ENCODE measurements at regions of chr5 and their contacts with region 1.

Region 1: DNA sequence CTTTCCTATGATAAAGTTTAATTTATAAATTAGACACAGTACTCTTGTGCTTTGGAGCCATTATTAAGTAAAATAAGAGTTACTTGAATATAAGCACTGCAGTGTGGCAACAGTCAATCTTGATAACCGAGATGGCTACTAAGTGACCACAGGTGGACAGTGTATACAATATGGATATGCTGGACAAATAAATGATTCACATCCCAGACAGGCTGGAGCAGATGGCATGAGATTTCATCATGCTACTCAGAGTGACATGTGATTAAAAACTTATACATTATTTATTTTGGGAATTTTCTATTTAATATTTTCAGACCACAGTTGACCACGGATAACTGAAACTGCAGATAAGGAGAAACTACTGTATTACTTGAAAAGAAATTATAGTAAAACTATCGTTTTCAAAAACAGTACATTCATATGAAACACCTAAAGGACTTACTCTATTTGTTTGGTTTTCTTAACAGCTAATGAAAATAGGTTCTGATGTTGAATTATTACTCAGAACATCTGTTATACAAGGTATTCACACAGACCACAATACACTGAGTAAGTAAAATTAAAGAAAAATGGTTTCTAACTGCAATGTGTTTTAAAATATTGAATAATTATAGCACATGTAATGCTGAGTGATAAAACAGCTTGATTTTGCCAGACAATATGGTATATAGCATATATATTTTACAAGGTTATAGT is 16.0 kb downstream of the LYRM7 start:
- DNase-seq: no peak
- ATAC-seq: no peak
- H3K4me3 Mint-ChIP-seq: no peak overlapping the region
- H3K27ac Mint-ChIP-seq: no peak overlapping the region
- H3K4me1 Mint-ChIP-seq: no peaks in the 10 kb centered on the region
- H3K27me3 Mint-ChIP-seq: no peaks in the 10 kb centered on the region
- CTCF ChIP-seq: no peak

Region 2: DNA sequence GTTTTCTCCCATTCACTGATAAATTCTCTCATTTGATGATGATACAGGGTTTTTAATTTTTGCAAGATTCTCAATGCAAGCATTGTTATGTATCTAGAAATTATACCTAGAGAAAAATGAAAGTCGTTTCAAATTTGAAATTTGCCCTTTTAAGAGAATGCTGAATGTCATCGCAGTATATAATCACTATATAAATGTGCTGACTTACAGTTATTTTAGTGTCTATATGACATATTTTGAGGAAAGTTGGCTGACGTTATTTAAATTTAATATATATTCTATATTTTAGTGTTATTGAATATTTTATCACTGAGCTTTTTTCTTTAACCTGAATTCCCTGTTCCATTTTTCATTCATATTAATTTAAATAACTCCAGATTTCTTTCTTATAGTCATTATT is 13.9 kb after region 1 on chr5:
- CTCF ChIA-PET with region 1: no interaction called
- POLR2A ChIA-PET with region 1: interaction called, 3 read pairs
- intact Hi-C with region 1: loop called (anchors 2 kb)
- DNase-seq: no peak
- ATAC-seq: no peak
- H3K4me3 Mint-ChIP-seq: no peak overlapping the region
- H3K27ac Mint-ChIP-seq: no peak overlapping the region
- H3K4me1 Mint-ChIP-seq: no peaks in the 10 kb centered on the region
- H3K27me3 Mint-ChIP-seq: no peaks in the 10 kb centered on the region
- CTCF ChIP-seq: no peak

Measured in activated B cell treated with CpG ODN at 0.5 μM for 24 hours (primary cell).